ENCODE measurements at regions of chr14 and their contacts with region 1.

Region 1: DNA sequence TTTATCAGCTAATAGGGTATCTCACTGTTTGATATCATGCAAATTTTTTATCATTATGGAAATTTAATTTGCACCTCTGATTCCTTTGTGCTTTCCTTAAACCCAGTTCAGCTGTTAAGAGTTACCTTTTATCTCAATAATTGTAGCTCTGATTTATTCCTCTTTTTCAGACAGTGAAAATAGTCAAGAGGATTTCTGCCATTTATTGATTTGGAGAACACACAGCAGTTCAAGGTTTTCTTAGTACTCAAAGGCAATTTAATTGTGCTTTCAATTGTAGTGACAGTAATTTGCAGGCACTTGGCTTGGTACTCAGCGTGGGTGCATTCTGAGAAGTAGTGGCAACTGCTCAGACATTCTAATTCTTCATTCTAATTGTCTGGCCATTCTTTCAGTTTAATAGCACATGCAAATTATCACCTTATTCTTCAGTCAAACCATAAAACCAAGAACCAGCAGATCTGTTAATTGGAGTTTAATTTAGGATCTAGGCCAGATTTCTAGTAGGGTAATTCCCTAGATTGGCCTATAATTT is 709.3 kb downstream of the RPS29 start:
- DNase-seq: no peak
- ATAC-seq: no peak
- H3K4me3 ChIP-seq: no peak overlapping the region
- H3K27ac ChIP-seq: no peak overlapping the region
- H3K4me1 ChIP-seq: no peaks in the 10 kb centered on the region
- H3K27me3 ChIP-seq: no peaks in the 10 kb centered on the region
- CTCF ChIP-seq: no peak
- EP300 ChIP-seq: no peak
- POLR2A ChIP-seq: no peak
- RAD21 ChIP-seq: no peak

Region 2: DNA sequence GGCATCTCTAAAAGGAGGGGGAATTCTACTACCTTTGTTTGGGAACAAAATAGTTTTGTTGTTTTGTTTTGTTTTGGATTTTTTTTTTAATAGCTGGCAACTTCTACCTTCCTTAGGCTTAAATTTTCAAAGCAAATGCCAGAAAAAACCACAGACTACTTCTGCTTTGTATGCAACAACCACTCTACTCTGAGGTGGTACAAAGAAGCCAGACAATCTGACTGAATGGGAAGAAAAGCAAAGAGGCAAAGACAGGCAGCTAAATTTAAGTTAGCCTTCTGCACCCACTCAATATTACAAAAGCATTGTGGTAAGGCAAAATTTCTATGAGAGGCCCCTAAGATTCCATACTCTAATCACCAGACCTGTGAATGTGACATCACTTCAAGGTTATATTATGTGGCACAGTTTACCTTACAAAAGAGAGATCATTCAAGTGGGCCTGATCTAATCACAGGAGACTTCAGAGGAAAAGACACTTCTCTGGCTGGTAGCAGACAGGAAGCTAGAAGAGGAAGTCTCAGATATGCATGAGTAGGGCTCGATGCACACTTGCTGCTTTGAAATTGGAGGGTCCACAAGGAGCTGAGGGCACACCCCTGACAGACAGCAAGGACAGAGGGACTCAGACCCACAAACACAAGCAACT is 142.7 kb after region 1 on chr14:
- CTCF ChIA-PET with region 1: no interaction called
- POLR2A ChIA-PET with region 1: no interaction called
- in situ Hi-C with region 1: loop called (anchors 5 kb)
- intact Hi-C with region 1: no loop called
- DNase-seq: no peak
- ATAC-seq: no peak
- H3K4me3 ChIP-seq: no peak overlapping the region
- H3K27ac ChIP-seq: no peak overlapping the region
- H3K4me1 ChIP-seq: no peaks in the 10 kb centered on the region
- H3K27me3 ChIP-seq: no peaks in the 10 kb centered on the region
- CTCF ChIP-seq: no peak
- EP300 ChIP-seq: no peak
- POLR2A ChIP-seq: no peak
- RAD21 ChIP-seq: no peak